ENCODE measurements at regions of chr1 and their contacts with region 1.

Region 1: DNA sequence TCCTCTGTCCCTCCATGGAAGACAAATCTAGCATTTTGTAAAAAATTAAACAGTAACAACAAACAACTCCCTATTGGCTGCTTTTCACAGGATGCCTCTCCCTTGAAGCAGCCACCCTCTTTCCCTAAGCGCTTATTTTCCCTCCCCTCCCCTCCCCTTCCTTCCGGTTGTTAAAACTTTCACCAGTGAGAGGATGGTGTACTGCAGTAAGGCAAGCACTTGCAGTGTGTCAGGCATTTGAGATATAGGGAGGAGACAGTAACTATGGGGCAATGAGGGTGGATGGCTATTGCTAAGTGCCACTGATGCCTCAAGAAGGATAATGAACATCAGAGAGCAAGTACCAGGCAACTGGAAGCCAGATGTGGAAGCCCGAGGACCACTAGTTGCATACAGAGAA is 19.1 kb upstream of the KIAA1614 start:
- DNase-seq: no peak
- ATAC-seq: no peak

Region 2: DNA sequence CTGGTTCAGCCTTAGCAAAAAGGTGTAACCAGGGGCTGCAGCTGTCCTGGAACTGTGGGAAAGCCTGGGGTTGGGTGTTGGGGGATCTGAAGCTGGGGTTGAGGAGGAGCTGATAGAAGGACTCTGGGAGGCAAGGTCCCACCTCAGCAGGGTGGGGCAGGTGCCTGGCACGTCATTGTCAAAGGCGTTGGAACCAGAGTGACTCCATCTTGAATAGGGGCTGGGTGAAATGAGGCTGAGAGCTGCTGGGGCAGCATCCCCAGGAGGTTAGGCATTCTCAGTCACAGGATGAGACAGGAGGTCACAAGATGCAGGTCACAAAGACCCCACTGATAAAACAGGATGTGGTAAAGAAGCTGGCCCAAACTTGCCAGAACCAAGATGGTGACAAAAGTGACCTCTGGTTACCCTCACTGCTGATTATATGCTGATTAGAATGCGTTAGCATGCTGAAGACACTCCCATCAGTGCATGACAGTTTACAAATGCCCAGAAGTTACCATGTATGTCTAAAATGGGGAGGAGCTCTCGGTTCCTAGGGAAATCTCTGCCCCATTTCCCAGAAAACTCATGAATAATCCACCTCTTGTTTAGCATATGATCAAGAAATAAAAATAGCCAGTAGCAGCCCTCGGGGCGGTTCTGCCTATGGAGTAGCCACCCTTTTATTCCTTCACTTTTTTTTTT is 280.3 kb after region 1 on chr1:
- intact Hi-C with region 1: loop called in 1 of 2 experiments (anchors 5 kb)
- DNase-seq: no peak
- ATAC-seq: no peak